Astrocyte of the cerebellum (primary cell): ENCODE measurements at regions of chr15 and their contacts with region 1.

Region 1: DNA sequence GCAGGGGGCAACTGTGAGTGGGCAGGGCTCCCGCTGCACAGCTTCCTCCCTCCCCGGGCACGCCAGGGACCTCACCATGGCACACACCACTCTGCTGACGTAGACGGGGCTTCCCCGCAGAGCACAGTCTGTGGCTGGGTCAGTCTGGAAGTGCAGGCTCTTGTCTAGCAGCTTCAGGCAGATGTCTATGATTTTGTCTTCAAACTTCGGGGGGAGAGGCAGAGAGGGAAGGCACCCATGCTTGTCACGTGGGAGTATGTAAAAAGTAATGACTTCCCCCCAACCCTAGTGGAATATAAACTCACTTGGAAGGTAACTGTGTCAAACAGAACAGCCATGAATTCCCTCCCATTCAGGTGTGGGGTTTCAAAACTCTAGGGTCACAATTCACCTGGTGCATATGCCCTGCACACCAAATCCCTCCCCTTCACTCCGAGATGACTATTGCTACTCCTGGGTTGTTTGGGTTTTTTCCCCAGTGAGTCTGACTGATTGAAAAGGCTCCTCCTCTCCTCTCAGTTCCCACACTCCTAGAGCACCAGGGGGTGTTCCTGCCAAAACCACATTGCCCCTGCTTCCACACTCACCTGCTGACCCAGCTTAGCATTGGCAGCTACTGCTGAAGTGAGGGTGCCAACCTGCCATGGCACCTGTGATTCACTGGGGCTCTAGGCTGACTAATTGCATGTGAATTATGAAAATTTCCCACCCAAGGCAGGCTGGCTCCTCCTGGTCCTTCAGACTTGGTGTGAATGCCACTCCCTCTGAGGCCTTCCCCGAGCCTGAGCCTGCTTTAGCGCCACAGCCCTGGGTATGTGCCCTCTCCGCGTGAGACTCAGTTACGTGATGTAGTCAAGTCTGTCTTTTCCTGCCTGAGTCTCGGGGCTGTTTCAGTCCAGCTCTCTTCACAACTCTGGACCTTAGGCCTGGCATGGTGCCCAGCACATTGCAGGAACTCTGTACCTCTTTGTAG is 13.0 kb downstream of the TGM5 start:
- DNase-seq: peak; percentile 56
- H3K4me3 ChIP-seq: no peak overlapping the region
- CTCF ChIP-seq: no peak

Region 2: DNA sequence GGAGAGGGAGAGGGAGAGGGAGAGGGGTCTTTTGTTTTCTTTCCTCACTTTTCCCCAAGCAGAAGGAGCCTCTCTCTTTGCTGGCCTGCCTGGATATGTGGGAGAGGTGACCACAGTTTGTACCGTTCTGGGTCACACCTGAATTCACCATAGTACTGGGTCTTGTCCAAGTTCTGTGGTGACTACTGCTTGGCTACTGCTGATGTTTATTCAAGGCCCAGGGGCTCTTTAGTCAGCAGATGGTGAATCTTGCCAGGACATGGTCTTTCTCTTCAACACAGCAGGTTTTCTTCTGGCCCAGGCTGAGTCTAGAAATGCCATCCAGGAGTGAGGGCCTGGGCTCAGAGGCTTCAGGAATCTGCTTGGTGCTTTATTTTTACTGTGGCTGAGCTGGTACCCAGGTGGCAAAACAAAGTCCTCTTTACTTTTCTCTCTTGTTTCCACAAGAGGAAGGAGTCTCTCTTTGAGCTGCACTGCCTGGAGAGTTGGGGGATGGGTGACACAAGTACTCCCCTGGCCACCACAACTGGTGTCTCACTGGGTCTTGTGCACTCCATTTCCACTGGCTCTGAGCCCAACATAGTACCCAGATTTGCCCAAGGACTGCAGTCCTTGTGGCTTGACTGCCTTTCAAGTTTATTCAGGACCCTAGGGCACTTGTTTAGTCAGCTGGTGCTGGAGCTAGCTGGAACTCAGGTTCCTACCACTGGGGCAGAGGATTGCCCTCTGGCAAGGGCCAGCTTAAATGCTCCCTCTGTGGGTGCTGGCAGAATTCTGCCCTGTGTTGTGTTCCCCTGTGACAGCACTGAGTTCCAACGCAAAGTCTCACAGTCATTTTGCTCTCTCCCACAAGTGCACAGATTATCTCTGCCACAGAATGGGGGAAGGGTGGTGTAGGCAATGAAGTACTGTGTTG is 85.3 kb before region 1 on chr15:
- in situ Hi-C with region 1: no loop called
- DNase-seq: peak; percentile 90
- H3K4me3 ChIP-seq: no peak overlapping the region
- CTCF ChIP-seq: no peak

Region 3: GRCh38 chr15:43209059-43209824 is 44.5 kb before region 1 on chr15:
- in situ Hi-C with region 1: loop called (anchors 5 kb)
- DNase-seq: no peak
- H3K4me3 ChIP-seq: no peak overlapping the region
- CTCF ChIP-seq: no peak

Region 4: DNA sequence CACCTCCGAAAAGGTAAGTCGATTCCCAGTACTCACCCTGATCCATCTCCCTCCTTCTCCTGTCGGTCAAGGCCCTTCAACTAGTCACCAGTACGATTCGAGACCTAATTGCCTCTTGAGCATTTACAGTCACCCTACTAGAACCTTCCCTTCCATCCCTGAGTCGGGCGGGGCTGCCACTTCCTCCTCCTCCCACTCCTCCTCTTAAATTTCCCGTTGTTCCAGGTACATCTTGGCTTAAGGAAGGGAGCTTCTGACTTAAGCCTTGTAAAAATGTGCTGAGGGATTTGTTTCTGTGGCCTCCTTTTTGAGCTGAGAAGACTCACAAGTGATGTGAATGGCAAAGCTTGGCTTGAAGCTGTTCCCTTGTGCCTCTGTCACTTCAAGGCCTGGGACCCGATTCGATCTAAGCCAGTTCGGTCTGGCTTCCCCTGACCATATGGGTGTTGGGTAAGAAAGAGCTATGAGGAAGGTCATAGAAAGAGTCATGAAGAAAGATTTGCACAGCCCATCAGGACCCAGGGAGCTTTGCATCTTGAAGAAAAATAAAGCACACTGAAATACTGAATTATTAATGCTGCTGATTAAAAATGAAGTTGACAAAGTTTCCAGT is 48.6 kb after region 1 on chr15:
- in situ Hi-C with region 1: loop called (anchors 5 kb)
- DNase-seq: no peak
- H3K4me3 ChIP-seq: no peak within 1 kb of the TSS
- CTCF ChIP-seq: no peak